Pancreas (tissue), 10 donors: ENCODE measurements at regions of chr4 and their contacts with region 1.

Region 1: GRCh38 chr4:68498413-68499007 is 51.2 kb downstream of the TMPRSS11E start:
- DNase-seq: peak in 4 of 6 donors; percentile 50 to 77 (median 64)
- ATAC-seq: peak; percentile 93 to 100 (median 98)
- H3K4me3 ChIP-seq: peak overlapping the region in 1 of 4 donors; percentile 4
- H3K27ac ChIP-seq: no peak overlapping the region
- H3K4me1 ChIP-seq: peaks cover 0 to 11% (median 3%) of the 10 kb centered on the region in 3 donors
- H3K27me3 ChIP-seq: no peaks in the 10 kb centered on the region
- CTCF ChIP-seq: peak; percentile 58 to 87 (median 79)

Region 2: GRCh38 chr4:68871809-68872642 is 373.5 kb after region 1 on chr4:
- intact Hi-C with region 1: loop called in 1 of 3 experiments (anchors 10 kb)
- DNase-seq: no peak
- ATAC-seq: peak; percentile 76 to 84 (median 80)
- H3K4me3 ChIP-seq: no peak overlapping the region
- H3K27ac ChIP-seq: peak overlapping the region; percentile 29 to 87 (median 76)
- H3K4me1 ChIP-seq: peaks cover 12 to 56% (median 28%) of the 10 kb centered on the region in 3 donors
- H3K27me3 ChIP-seq: no peaks in the 10 kb centered on the region
- CTCF ChIP-seq: no peak

Region 3: GRCh38 chr4:69167300-69167699 is 668.8 kb after region 1 on chr4:
- intact Hi-C with region 1: loop called in 1 of 3 experiments (anchors 5 kb)
- DNase-seq: no peak
- ATAC-seq: peak in 3 of 4 donors; percentile 57 to 75 (median 71)
- H3K4me3 ChIP-seq: no peak overlapping the region
- H3K27ac ChIP-seq: peak overlapping the region in 2 of 4 donors; percentile 66 to 86
- H3K4me1 ChIP-seq: peaks cover 16 to 24% (median 20%) of the 10 kb centered on the region in 3 donors
- H3K27me3 ChIP-seq: no peaks in the 10 kb centered on the region
- CTCF ChIP-seq: no peak